A549 (cell line): ENCODE measurements at regions of chr12 and their contacts with region 1.

Region 1: DNA sequence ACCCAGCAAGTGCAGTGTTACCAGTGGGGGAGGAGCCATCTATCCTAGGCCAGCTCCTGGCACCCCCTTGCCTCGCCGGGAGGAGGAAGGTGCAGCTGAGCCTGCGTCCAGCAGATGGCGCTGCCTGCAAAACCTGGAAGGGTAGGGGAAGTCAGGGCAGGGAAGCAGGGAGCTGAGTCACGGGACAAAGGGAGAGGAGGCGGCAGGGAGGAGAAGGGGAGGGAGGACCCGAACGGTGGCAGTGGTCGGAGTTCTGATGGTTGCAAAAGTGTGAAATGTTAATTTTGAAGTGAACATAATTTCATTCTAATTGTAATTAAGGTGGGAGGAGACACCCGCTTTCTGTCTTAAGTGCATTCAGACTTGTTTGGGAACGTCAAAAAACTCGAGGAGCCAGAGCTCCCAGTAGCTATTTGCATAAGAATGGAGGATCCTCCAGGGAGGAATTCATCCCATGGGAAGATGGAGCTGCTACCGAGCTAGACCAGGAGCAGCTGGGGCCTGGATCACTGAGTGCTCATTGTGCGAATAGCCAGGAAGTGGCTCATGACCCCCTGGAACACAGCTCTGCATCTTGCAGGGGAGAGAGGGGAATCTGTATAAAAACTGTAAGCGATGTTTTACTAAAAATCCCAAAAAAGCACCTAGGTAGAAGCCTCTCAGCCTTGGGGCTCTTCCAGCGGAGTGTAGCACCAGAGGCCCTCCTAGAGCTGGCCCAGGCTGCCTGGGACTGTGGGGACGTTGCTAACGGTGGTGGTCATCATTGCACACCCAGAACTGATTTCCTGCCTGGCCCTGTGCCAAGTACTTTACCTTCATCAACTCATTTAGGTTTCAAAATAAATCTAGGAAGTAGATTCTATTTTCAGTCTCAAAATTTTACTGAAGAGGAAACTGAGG is 59.5 kb downstream of the EMP1 start:
- DNase-seq: peak; percentile 95
- ATAC-seq: peak; percentile 98 to 100
- H3K4me3 ChIP-seq: peak overlapping the region; percentile 40
- H3K27ac ChIP-seq: peak overlapping the region; percentile 79 to 87
- H3K4me1 ChIP-seq: peaks cover 6% of the 10 kb centered on the region
- CTCF ChIP-seq: peak; percentile 94
- EP300 ChIP-seq: no peak
- POLR2A ChIP-seq: peak; percentile 67
- RAD21 ChIP-seq: peak; percentile 85 to 95

Region 2: GRCh38 chr12:12661086-12661485 is 595.0 kb before region 1 on chr12:
- CTCF ChIA-PET with region 1: no interaction called
- POLR2A ChIA-PET with region 1: no interaction called
- DNase-seq: no peak
- ATAC-seq: no peak
- H3K4me3 ChIP-seq: no peak overlapping the region
- H3K27ac ChIP-seq: no peak overlapping the region
- H3K4me1 ChIP-seq: peaks cover 17% of the 10 kb centered on the region
- CTCF ChIP-seq: no peak
- EP300 ChIP-seq: no peak
- POLR2A ChIP-seq: no peak
- RAD21 ChIP-seq: no peak

Region 3: GRCh38 chr12:13074396-13075107 is 181.5 kb before region 1 on chr12:
- CTCF ChIA-PET with region 1: no interaction called
- POLR2A ChIA-PET with region 1: no interaction called
- DNase-seq: no peak
- ATAC-seq: no peak
- H3K4me3 ChIP-seq: no peak overlapping the region
- H3K27ac ChIP-seq: no peak overlapping the region
- H3K4me1 ChIP-seq: no peaks in the 10 kb centered on the region
- CTCF ChIP-seq: no peak
- EP300 ChIP-seq: no peak
- POLR2A ChIP-seq: no peak
- RAD21 ChIP-seq: no peak

Region 4: DNA sequence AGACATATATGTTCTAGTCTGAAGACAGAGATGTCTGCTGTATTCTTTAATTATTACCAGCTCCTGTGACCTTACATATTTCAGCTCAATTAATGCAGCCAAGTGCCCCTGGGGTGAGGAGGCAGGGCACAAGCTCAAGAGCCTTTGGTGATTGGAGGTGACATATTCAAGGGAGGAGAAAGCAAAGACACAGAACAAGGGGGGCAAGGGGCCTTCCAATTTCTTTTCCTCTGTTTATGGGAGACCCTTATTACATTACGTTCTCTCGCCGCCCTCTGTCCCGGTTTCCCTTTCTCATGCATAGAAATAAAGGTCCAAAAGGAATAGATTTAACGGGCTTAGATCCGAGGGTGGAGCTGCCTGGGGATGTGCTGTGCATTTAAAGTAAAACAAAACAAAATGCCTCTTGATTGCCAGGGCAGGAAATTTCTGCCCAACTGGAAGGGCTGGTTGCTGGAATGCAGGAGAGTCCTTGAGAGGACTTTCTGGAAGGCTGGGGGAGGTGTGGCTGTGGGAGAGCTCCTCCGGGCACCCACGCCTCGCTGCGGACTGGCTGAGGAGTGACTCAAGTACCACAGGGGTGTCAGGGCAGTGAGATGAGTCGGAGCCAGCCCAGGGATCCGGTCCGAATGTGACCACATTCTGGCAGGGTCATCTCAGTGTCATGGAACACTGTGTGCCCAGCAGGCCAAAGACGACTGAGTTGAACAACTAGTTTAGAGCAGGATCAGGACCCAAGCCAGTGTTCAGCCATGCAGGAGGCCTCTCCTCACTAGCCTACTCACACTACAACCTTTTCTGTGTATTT is 120.5 kb before region 1 on chr12:
- CTCF ChIA-PET with region 1: no interaction called
- POLR2A ChIA-PET with region 1: no interaction called
- DNase-seq: peak in 1 of 2 experiments; percentile 33
- ATAC-seq: peak; percentile 22 to 69; a peak in 4 of 6 replicates
- H3K4me3 ChIP-seq: no peak overlapping the region
- H3K27ac ChIP-seq: peak overlapping the region; percentile 3 to 46; a peak in 1 of 6 replicates
- H3K4me1 ChIP-seq: peaks cover 35% of the 10 kb centered on the region
- CTCF ChIP-seq: no peak
- EP300 ChIP-seq: no peak
- POLR2A ChIP-seq: no peak
- RAD21 ChIP-seq: no peak

Region 5: DNA sequence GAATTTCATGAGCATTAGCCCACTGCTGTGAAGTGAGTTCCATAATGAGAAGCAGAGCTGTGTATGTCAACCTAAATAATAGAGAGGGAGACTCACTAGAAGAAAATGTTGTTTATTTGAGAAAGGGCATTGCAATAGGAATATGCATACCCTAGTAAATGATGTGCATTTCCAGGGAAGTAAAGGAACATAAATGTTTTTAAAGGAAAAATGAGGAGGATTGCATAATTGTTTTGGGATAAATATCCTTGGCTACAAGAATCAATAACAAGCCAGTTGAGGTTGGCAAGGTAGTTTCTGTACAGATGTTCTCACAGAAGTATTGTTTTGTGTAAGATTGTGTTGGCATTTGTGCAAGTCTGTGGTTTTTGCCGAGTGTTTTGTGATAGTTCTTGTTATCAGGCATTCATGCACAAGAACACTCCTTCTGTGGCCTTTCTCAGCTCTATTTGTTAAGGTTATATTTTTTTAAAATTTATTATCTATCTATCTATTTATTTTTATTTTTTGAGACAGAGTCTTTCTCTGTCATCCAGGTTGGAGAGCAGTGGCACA is 12.4 kb before region 1 on chr12:
- CTCF ChIA-PET with region 1: interaction called, 33 read pairs
- POLR2A ChIA-PET with region 1: no interaction called
- DNase-seq: no peak
- ATAC-seq: no peak
- H3K4me3 ChIP-seq: no peak overlapping the region
- H3K27ac ChIP-seq: no peak overlapping the region; a peak in 1 of 6 replicates
- H3K4me1 ChIP-seq: peaks cover 19% of the 10 kb centered on the region
- CTCF ChIP-seq: no peak
- EP300 ChIP-seq: no peak
- POLR2A ChIP-seq: no peak
- RAD21 ChIP-seq: no peak

Region 6: DNA sequence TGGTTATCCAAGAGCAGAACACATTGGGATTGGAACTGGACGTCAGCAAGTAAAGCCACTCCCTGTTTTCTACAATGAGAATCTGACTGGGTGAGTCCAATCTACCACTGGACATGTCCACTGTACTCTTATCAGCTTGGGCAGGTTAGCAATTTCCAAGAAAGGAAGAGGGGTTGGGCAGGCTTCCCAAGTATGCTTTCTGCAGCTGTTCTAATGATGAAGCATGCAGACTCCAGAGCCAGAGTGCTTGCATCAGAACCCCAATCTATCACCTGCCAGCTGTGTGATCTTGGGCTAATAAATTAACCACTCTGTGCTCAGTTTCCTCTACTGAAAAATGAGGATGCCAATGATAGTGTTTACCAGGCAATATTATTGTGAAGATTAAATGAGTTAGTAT is 32.5 kb after region 1 on chr12:
- CTCF ChIA-PET with region 1: no interaction called
- POLR2A ChIA-PET with region 1: no interaction called
- DNase-seq: no peak
- ATAC-seq: no peak
- H3K4me3 ChIP-seq: no peak overlapping the region
- H3K27ac ChIP-seq: no peak overlapping the region
- H3K4me1 ChIP-seq: 0 out of 3 replicates have a peak, but pooled peaks cover 4% of the 10 kb centered on the region
- CTCF ChIP-seq: no peak
- EP300 ChIP-seq: no peak
- POLR2A ChIP-seq: no peak
- RAD21 ChIP-seq: no peak

Region 7: DNA sequence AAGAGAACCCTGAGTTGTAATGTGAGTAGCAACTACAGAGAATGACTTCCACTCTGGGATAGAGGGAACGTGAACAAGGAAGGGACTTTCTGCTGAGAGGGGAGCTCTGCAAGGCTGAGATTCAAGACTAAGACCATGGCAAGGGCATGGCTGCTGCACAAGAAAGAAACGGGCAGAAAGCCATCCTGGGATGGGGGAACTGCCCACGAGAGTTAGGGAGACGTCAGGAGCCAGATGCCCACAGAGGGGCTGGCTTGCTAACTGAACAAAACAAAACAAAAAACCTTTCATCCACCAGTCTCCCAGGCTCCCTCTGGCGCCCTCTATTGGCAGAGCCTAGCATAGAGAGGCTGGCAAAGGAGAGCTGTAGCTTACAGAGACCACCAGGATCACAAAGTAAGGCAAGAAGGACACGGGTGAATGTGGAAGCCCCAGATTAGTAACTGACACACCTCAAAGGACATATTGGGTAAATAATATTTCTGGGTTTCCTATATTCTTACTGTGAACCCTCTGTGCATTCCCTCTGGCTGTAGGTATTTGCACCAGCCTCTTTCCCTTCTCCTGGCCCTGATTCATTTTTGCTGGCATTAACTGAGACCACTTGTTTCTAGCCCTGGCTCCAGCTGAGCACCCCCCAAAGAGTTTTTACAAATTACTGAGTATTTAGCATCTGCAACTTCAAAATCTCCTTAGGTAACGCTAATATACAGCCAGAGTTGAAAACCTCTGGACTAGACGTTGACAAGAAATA is 278.8 kb after region 1 on chr12:
- CTCF ChIA-PET with region 1: interaction called, 20 read pairs
- POLR2A ChIA-PET with region 1: no interaction called
- DNase-seq: peak; percentile 31 to 60
- ATAC-seq: peak; percentile 57 to 82; a peak in 5 of 6 replicates
- H3K4me3 ChIP-seq: no peak overlapping the region
- H3K27ac ChIP-seq: 0 out of 6 replicates have a peak overlapping the region, but pooled peaks of 1 of the 2 experiments have one; percentile 36
- H3K4me1 ChIP-seq: no peaks in the 10 kb centered on the region
- CTCF ChIP-seq: peak; percentile 89
- EP300 ChIP-seq: no peak
- POLR2A ChIP-seq: no peak
- RAD21 ChIP-seq: peak; percentile 71 to 75

Region 8: DNA sequence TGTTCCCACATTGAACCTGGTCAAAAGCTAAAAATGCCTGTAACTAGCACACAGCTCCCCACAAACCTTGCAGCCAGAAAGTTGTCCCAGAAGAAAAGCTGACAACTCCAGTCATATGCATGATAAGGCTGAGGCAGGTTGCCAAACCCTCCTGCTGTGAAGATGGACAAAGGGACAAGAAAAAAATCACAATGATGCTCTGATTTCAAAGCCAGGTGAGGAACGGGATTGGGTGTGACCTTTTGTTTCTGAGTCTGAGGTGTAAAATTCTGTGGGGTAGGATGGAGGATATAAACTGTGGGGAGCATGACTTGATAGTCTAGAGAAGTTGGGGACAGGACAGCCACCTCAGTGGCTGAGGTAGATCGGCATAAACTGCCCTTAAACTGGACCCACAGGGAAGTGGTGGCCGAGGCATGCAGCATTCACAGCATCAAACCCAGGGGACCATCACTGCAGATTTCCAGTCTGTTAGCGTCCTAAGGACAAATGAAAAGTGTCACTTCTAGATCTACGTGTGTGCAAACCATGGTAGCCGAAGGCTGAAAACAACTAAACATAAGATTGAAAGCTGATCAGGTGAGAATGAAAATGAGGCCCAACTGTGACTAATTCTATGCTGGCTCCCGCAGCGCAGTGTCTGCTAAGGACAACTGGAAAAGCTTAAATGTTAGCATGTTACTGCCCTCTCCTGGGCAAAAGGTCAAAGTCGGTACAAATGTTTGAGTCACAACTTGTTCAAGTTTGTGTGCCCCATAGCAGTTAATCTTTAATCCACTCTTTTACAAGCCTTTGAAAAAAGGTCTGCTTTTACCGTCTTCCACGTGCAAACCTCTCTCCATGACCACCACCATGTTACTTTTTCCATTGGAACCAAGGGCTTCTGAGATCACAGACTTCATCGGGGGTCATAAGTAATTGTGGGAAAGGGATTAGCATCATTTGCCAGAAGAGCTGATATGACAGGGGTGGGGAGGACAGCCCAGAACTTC is 685.5 kb after region 1 on chr12:
- CTCF ChIA-PET with region 1: interaction called, 17 read pairs
- POLR2A ChIA-PET with region 1: no interaction called
- DNase-seq: peak; percentile 87 to 96
- ATAC-seq: peak; percentile 95 to 96
- H3K4me3 ChIP-seq: no peak overlapping the region
- H3K27ac ChIP-seq: peak overlapping the region; percentile 75 to 85
- H3K4me1 ChIP-seq: peaks cover 51% of the 10 kb centered on the region
- CTCF ChIP-seq: peak; percentile 82
- EP300 ChIP-seq: no peak
- POLR2A ChIP-seq: no peak
- RAD21 ChIP-seq: peak; percentile 88 to 93

Region 9: GRCh38 chr12:14167005-14167628 is 911.1 kb after region 1 on chr12:
- CTCF ChIA-PET with region 1: interaction called, 31 read pairs
- POLR2A ChIA-PET with region 1: interaction called, 3 read pairs
- DNase-seq: peak; percentile 60 to 61
- ATAC-seq: peak; percentile 68 to 84; a peak in 4 of 6 replicates
- H3K4me3 ChIP-seq: no peak overlapping the region
- H3K27ac ChIP-seq: no peak overlapping the region
- H3K4me1 ChIP-seq: no peaks in the 10 kb centered on the region
- CTCF ChIP-seq: peak; percentile 97
- EP300 ChIP-seq: no peak
- POLR2A ChIP-seq: no peak
- RAD21 ChIP-seq: peak; percentile 96 to 99